Gastrocnemius medialis (tissue), 4 donors: ENCODE measurements at regions of chr17 and their contacts with region 1.

Region 1: DNA sequence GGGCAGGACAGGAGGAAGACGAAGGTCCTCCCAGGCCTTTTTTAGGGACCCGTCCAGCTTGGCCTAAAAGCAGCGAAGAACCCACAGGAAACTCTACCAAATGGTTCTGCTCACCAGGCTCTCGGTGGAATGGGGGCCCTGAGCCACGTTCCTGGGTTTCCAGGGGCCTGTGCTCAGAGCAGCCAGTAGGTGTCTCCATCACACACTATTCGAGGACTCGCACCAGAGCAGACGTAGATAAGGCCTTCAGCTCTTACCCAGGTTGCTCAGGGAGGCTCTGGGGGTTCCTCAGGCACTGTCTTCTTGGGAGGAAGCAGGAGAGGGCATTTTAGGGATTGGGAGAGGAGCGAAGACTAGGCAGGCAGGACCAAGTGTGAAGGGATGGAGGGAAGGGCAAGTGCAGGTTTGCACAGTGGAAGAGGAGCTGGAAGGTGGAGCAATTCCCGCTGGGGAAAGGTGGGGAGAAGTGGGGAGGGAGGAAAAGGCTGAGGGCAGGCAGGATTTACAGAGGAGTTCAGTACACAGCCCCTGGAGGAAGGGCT is 157.1 kb downstream of the RGS9 start:
- DNase-seq: peak; percentile 17 to 52
- ATAC-seq: peak; percentile 75 to 95
- H3K4me3 ChIP-seq: no peak overlapping the region
- H3K27ac ChIP-seq: no peak overlapping the region
- H3K4me1 ChIP-seq: peaks cover 4 to 6% of the 10 kb centered on the region in 2 donors
- H3K27me3 ChIP-seq: no peaks in the 10 kb centered on the region
- CTCF ChIP-seq: peak; percentile 59 to 78 (median 74)
- POLR2A ChIP-seq: no peak

Region 2: DNA sequence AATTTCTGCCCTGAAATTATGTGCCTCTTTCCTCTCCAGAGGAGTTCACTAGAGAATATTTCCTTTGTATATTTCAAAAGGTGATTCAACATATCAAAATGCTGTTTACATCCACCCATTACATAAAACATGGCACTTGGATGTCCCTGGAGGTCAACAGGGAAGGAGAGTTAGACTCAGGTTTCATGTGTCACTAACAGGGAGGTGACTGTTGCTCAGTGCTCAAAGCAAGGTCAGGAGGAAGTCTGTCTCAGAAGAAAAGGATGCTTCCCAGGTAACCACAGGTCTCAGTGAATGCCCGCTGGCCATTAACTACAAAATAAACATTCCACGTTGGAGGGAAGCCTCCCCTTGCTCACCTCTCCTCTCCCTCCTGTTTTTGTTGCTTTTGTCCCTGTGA is 68.6 kb after region 1 on chr17:
- in situ Hi-C with region 1: no loop called
- intact Hi-C with region 1: loop called (anchors 5 kb)
- DNase-seq: no peak
- ATAC-seq: peak; percentile 76 to 77
- H3K4me3 ChIP-seq: no peak overlapping the region
- H3K27ac ChIP-seq: peak overlapping the region; percentile 52 to 75 (median 64)
- H3K4me1 ChIP-seq: peaks cover 6 to 8% of the 10 kb centered on the region in 2 donors
- H3K27me3 ChIP-seq: no peaks in the 10 kb centered on the region
- CTCF ChIP-seq: no peak
- POLR2A ChIP-seq: no peak

Region 3: GRCh38 chr17:65422714-65423113 is 128.5 kb after region 1 on chr17:
- in situ Hi-C with region 1: no loop called
- intact Hi-C with region 1: loop called (anchors 5 kb)
- DNase-seq: no peak
- ATAC-seq: no peak
- H3K4me3 ChIP-seq: no peak overlapping the region
- H3K27ac ChIP-seq: peak overlapping the region in 3 of 4 donors; percentile 34 to 60 (median 38)
- H3K4me1 ChIP-seq: peaks cover 10% of the 10 kb centered on the region in 2 donors
- H3K27me3 ChIP-seq: no peaks in the 10 kb centered on the region
- CTCF ChIP-seq: no peak
- POLR2A ChIP-seq: no peak

Region 4: GRCh38 chr17:65556014-65556909 is 262.0 kb after region 1 on chr17:
- in situ Hi-C with region 1: loop called in 2 of 4 experiments (anchors 5 to 10 kb)
- intact Hi-C with region 1: loop called (anchors 5 kb)
- DNase-seq: peak; percentile 62 to 81
- ATAC-seq: peak; percentile 29 to 46
- H3K4me3 ChIP-seq: peak overlapping the region in 1 of 4 donors; percentile 32
- H3K27ac ChIP-seq: no peak overlapping the region
- H3K4me1 ChIP-seq: peaks cover 14 to 31% of the 10 kb centered on the region in 2 donors
- H3K27me3 ChIP-seq: no peaks in the 10 kb centered on the region
- CTCF ChIP-seq: peak; percentile 73 to 95 (median 90)
- POLR2A ChIP-seq: peak; percentile 41 to 76

Region 5: GRCh38 chr17:65794572-65794971 is 500.3 kb after region 1 on chr17:
- in situ Hi-C with region 1: no loop called
- intact Hi-C with region 1: loop called (anchors 10 kb)
- DNase-seq: no peak
- ATAC-seq: no peak
- H3K4me3 ChIP-seq: no peak overlapping the region
- H3K27ac ChIP-seq: no peak overlapping the region
- H3K4me1 ChIP-seq: no peaks in the 10 kb centered on the region
- H3K27me3 ChIP-seq: no peaks in the 10 kb centered on the region
- CTCF ChIP-seq: peak in 3 of 5 experiments; percentile 15 to 29 (median 26)
- POLR2A ChIP-seq: no peak

Region 6: GRCh38 chr17:66165513-66166123 is 871.4 kb after region 1 on chr17:
- in situ Hi-C with region 1: loop called (anchors 10 to 25 kb)
- intact Hi-C with region 1: loop called (anchors 5 kb)
- DNase-seq: no peak
- ATAC-seq: no peak
- H3K4me3 ChIP-seq: no peak overlapping the region
- H3K27ac ChIP-seq: no peak overlapping the region
- H3K4me1 ChIP-seq: peaks cover 0 to 3% of the 10 kb centered on the region in 2 donors
- H3K27me3 ChIP-seq: no peaks in the 10 kb centered on the region
- CTCF ChIP-seq: peak; percentile 57 to 66 (median 63)
- POLR2A ChIP-seq: no peak